ENCODE measurements at regions of chr12 and their contacts with region 1.

Region 1: GRCh38 chr12:121668750-121669520 is 519 bp downstream of the MORN3 start:
- DNase-seq: peak; percentile 71
- H3K4me3 ChIP-seq: no peak overlapping the region
- H3K27ac ChIP-seq: no peak overlapping the region
- H3K4me1 ChIP-seq: no peaks in the 10 kb centered on the region
- H3K27me3 ChIP-seq: no peaks in the 10 kb centered on the region
- CTCF ChIP-seq: peak; percentile 64

Region 2: DNA sequence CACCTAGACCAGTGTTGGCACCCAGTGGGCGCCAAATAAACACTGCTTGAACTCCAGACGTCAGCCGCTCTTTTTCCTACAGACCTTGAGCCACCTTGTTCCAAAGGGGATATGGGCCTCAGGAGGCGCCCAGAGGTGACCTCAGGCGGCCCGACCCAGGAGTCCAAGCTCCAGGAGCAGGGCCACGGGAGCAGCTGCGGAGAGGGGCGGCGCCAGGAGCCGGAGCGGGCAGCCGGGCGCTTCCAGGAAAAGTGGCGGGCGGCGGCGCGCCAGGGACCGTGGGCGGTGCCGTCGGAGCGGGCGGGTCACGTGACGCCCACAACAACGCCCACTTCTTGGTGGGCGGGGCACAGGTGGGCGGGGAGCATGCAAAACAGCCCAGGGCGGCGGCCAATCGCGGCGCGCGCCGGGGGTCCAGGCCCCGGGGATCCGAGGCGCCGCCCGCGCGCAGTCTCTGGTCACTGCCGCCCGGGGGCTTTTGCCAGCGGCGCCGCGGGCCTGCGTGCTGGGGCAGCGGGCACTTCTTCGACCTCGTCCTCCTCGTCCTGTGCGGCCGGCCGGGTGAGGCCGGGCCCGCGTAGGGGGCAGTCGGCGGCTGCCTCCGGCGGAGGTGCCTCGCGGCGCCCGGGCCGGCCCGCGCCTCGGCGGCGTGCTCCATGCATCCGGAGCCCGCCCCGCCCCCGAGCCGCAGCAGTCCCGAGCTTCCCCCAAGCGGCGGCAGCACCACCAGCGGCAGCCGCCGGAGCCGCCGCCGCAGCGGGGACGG is 42.7 kb before region 1 on chr12 and contains the start of gene ORAI1:
- CTCF ChIA-PET with region 1: interaction called, 4 read pairs
- POLR2A ChIA-PET with region 1: no interaction called
- intact Hi-C with region 1: loop called (anchors 5 kb)
- DNase-seq: peak; percentile 96
- H3K4me3 ChIP-seq: peak within 1 kb of the TSS; percentile 91
- H3K27ac ChIP-seq: peak within 1 kb of the TSS; percentile 82
- H3K4me1 ChIP-seq: peaks cover 31% of the 10 kb centered on the region
- H3K27me3 ChIP-seq: no peaks in the 10 kb centered on the region
- CTCF ChIP-seq: no peak
- total RNA-seq, gene ORAI1: 25.6 and 28.2 TPM in 2 replicates

Region 3: GRCh38 chr12:121634836-121635235 is 34.1 kb before region 1 on chr12:
- CTCF ChIA-PET with region 1: no interaction called
- POLR2A ChIA-PET with region 1: interaction called, 10 read pairs
- intact Hi-C with region 1: no loop called
- DNase-seq: no peak
- H3K4me3 ChIP-seq: no peak overlapping the region
- H3K27ac ChIP-seq: no peak overlapping the region
- H3K4me1 ChIP-seq: peaks cover 11% of the 10 kb centered on the region
- H3K27me3 ChIP-seq: no peaks in the 10 kb centered on the region
- CTCF ChIP-seq: no peak